ENCODE measurements at regions of chr17 and their contacts with region 1.

Region 1: GRCh38 chr17:28405632-28406472 is at the start of gene SLC46A1:
- DNase-seq: peak; percentile 34
- H3K4me3 Mint-ChIP-seq: peak within 1 kb of the TSS; percentile 66
- H3K27ac Mint-ChIP-seq: peak within 1 kb of the TSS; percentile 20
- H3K4me1 Mint-ChIP-seq: peaks cover 10% of the 10 kb centered on the region
- H3K27me3 Mint-ChIP-seq: peaks cover 17% of the 10 kb centered on the region
- total RNA-seq, gene SLC46A1: 0.74 to 1.5 TPM

Region 2: DNA sequence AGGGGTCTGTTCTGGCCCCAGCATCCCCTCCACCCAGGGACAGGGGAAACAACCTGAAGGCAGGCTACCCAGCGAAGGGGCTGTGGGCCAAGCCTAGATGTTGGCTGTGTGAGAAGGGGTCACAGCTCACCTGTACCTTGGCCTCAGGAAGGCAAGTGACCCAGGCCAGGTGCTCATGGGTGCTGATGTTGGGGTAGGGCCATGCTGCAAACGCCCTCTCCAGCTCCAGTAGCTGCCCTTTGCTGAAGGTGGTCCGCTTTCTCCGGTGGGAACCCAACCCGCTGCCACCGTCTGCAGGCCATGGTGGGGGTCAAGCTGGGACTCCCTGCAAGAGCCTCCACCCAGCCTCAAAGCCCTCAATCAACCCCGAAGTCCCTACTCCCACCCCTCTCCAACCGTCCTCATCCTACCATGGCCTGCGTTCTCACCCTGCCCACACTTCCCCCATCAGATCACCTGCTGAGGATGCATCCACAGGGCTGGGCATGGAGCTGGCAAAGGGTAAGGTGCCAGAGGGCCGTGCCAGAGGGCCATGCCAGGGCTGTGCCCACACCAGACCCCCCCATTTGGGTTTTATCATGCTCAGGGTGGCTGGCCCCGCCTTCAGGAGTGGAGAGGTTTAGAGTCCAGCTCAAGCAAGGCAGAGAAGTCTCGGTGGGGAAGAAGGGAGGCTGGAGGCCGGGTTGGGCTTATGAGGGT is 41.0 kb before region 1 on chr17 and contains the start of gene SEBOX:
- CTCF ChIA-PET with region 1: no interaction called
- POLR2A ChIA-PET with region 1: no interaction called
- DNase-seq: no peak
- H3K4me3 Mint-ChIP-seq: no peak within 1 kb of the TSS
- H3K27ac Mint-ChIP-seq: no peak within 1 kb of the TSS
- H3K4me1 Mint-ChIP-seq: no peaks in the 10 kb centered on the region
- H3K27me3 Mint-ChIP-seq: no peaks in the 10 kb centered on the region
- total RNA-seq, gene SEBOX: not detected

Region 3: GRCh38 chr17:28416703-28417311 is 11.0 kb after region 1 on chr17:
- CTCF ChIA-PET with region 1: interaction called, 13 read pairs
- POLR2A ChIA-PET with region 1: no interaction called
- DNase-seq: peak; percentile 74
- H3K4me3 Mint-ChIP-seq: no peak overlapping the region
- H3K27ac Mint-ChIP-seq: no peak overlapping the region
- H3K4me1 Mint-ChIP-seq: no peaks in the 10 kb centered on the region
- H3K27me3 Mint-ChIP-seq: peaks cover 16% of the 10 kb centered on the region

Measured in activated CD4-positive, alpha-beta T cell treated with anti-CD3 and anti-CD28 coated beads, Interleukin-2, amount 10 ng/mL, durations not matched to agents 7 days and 5 days (primary cell).